Activated CD4-positive, alpha-beta memory T cell treated with anti-CD3 and anti-CD28 coated beads for 36 hours (primary cell): ENCODE measurements at regions of chr5 and their contacts with region 1.

Region 1: GRCh38 chr5:69093771-69094482 is at the start of gene SLC30A5:
- DNase-seq: peak; percentile 99
- H3K4me3 Mint-ChIP-seq: peak within 1 kb of the TSS; percentile 91
- H3K27ac Mint-ChIP-seq: peak within 1 kb of the TSS; percentile 89
- H3K4me1 Mint-ChIP-seq: peaks cover 26% of the 10 kb centered on the region
- H3K27me3 Mint-ChIP-seq: no peaks in the 10 kb centered on the region
- total RNA-seq, gene SLC30A5: 42.8 to 49.0 TPM

Region 2: DNA sequence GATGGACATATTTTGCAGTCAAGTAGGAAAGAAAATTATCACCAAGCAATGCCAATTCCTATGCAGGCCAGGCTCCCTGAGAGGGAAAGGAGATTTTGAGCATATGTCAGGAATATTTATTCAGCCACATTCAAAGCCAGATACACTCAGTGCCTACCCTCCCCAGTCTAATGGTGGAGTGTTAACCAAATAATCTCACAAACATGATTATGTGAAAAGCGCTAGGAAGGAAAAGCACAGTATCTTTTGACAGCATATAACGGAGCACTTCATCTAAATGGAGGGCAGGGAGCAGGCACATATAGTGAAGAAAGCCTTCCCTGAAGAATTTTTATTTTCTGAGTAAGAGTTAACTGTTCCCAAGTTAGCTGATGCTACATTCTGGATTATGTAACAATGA is 80.4 kb before region 1 on chr5:
- CTCF ChIA-PET with region 1: no interaction called
- POLR2A ChIA-PET with region 1: no interaction called
- intact Hi-C with region 1: no loop called
- DNase-seq: no peak
- H3K4me3 Mint-ChIP-seq: peak overlapping the region; percentile 3
- H3K27ac Mint-ChIP-seq: no peak overlapping the region
- H3K4me1 Mint-ChIP-seq: no peaks in the 10 kb centered on the region
- H3K27me3 Mint-ChIP-seq: peaks cover 14% of the 10 kb centered on the region

Region 3: DNA sequence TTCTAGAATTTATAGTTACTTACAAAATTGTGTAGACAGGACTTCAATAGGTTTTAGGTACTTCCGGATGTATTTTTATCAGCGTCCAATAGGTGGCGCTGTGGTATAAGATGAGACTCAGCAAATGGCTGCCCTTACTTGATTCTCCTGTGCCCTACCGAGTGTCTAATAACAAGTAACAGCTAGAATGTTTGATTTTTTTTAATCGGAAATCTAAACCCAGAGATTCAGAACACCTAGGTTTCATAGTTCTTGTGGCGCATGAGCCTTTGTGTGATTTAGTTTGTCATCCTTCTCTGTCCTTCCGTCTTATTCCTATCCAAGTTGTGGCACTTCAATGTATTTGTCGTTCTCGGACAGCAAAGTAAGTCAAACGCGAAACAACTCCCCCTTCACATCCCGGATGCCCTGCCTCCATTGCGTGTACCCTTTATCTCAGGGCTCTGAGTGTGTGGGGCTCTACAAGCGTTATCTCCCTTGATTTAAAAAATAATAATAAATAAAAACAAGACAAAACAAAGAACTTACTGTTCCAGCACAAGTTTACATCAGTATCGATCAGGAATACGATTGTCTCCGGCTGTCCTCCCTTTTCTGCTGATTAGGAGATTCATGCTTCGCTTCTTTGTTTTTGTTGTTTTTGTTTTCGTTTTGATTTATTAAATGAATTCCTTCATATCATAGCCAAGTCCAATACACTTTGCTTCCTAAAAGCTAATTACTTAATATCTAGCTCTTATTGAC is 50.8 kb before region 1 on chr5:
- CTCF ChIA-PET with region 1: interaction called, 26 read pairs
- POLR2A ChIA-PET with region 1: interaction called, 3 read pairs
- intact Hi-C with region 1: loop called (anchors 1 kb)
- DNase-seq: peak; percentile 82
- H3K4me3 Mint-ChIP-seq: peak overlapping the region; percentile 70
- H3K27ac Mint-ChIP-seq: peak overlapping the region; percentile 76
- H3K4me1 Mint-ChIP-seq: peaks cover 8% of the 10 kb centered on the region
- H3K27me3 Mint-ChIP-seq: no peaks in the 10 kb centered on the region

Region 4: GRCh38 chr5:69115526-69115925 is 21.6 kb after region 1 on chr5:
- CTCF ChIA-PET with region 1: interaction called, 10 read pairs
- POLR2A ChIA-PET with region 1: no interaction called
- intact Hi-C with region 1: no loop called
- DNase-seq: no peak
- H3K4me3 Mint-ChIP-seq: no peak overlapping the region
- H3K27ac Mint-ChIP-seq: no peak overlapping the region
- H3K4me1 Mint-ChIP-seq: no peaks in the 10 kb centered on the region
- H3K27me3 Mint-ChIP-seq: no peaks in the 10 kb centered on the region

Region 5: GRCh38 chr5:69158039-69158438 is 64.1 kb after region 1 on chr5:
- CTCF ChIA-PET with region 1: no interaction called
- POLR2A ChIA-PET with region 1: no interaction called
- intact Hi-C with region 1: no loop called
- DNase-seq: no peak
- H3K4me3 Mint-ChIP-seq: no peak overlapping the region
- H3K27ac Mint-ChIP-seq: no peak overlapping the region
- H3K4me1 Mint-ChIP-seq: no peaks in the 10 kb centered on the region
- H3K27me3 Mint-ChIP-seq: no peaks in the 10 kb centered on the region

Region 6: GRCh38 chr5:69189162-69190086 is 95.5 kb after region 1 on chr5 and contains the start of gene CENPH:
- CTCF ChIA-PET with region 1: interaction called, 15 read pairs
- POLR2A ChIA-PET with region 1: interaction called, 14 read pairs
- intact Hi-C with region 1: loop called (anchors 1 kb)
- DNase-seq: peak; percentile 96
- H3K4me3 Mint-ChIP-seq: peak within 1 kb of the TSS; percentile 90
- H3K27ac Mint-ChIP-seq: peak within 1 kb of the TSS; percentile 89
- H3K4me1 Mint-ChIP-seq: peaks cover 6% of the 10 kb centered on the region
- H3K27me3 Mint-ChIP-seq: no peaks in the 10 kb centered on the region
- total RNA-seq, gene CENPH: 80.7 to 82.0 TPM

Region 7: DNA sequence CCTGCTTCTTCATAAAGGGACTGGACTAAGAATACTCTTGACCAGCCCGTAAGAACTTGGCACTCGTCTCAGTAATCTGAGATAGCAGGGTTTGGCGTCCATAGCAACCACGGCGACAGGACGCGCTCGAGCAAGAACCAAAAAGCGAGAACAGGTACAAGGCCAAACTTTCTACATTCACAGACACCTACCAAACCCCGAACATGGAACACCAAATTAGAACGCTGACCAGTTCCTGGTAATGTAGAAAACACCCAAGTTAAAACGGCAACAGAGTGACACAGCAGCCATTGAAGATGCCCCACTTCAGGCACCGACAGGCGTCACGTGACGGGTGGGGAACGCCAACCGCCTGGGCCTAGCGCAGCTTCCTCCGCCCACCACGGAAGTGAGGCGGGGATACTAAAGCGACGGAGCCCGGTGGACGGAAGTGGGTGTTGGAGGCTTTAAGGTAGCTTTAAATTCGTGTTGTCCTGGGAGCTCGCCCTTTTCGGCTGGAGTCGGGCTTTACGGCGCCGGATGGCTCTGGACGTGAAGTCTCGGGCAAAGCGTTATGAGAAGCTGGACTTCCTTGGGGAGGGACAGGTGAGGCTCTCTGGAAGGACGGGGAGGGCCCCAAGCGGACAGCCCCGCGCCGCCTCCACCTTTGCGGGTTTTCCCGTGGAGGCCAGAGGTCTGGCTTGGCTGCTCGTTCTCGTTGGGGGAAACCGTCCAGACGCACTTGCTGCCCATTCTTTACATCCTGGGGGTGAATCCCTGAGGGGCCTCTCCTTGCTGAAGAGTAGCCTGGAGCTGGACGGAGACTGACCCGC is 140.7 kb after region 1 on chr5 and contains the start of gene CDK7:
- CTCF ChIA-PET with region 1: interaction called, 9 read pairs
- POLR2A ChIA-PET with region 1: interaction called, 7 read pairs
- intact Hi-C with region 1: loop called (anchors 2 kb)
- DNase-seq: peak; percentile 96
- H3K4me3 Mint-ChIP-seq: peak within 1 kb of the TSS; percentile 98
- H3K27ac Mint-ChIP-seq: peak within 1 kb of the TSS; percentile 81
- H3K4me1 Mint-ChIP-seq: peaks cover 36% of the 10 kb centered on the region
- H3K27me3 Mint-ChIP-seq: no peaks in the 10 kb centered on the region
- total RNA-seq, gene CDK7: 36.2 to 41.2 TPM

Region 8: DNA sequence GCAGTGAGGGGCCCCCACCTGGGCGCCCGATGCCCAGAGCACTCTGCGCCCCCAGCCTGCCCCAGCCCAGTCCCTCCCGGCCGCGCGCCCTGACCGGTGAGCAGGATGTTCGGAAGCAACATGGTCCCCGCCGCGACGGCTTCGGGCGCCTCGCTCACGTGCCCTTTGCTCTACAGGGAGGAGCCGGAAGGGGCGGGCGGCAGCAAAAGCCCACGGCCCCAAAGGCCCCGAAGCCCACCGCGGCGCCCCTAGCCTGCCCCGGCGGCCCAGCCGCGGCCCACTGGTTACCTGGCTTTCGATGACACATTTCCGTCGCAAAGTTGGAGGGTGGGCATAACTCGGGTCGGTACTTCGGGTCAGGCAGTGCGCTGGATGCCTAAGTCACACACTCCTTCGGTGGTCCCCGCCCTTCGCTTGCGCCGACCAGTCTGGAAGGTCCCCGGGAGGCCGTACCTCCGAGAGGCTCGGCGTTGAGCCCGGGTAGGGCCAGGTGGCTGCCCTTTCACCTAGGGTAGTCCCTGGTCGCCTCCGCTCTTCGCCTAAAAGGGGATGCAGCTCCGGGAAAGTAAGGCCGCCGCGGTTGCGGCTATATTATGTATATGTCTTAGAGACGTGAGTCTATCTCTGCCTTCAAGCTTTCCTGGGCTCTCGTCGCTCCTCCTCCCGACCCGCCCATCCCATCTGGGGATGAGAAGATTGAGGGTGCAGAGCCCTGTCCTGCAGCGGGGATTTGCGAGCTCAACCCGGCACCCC is 275.6 kb after region 1 on chr5 and contains the starts of genes AK6, RAD17 and TAF9:
- CTCF ChIA-PET with region 1: interaction called, 9 read pairs
- POLR2A ChIA-PET with region 1: interaction called, 5 read pairs
- intact Hi-C with region 1: loop called (anchors 1 kb)
- DNase-seq: peak; percentile 94
- H3K4me3 Mint-ChIP-seq: peak within 1 kb of the TSS; percentile 98
- H3K27ac Mint-ChIP-seq: peak within 1 kb of the TSS; percentile 97
- H3K4me1 Mint-ChIP-seq: peaks cover 44% of the 10 kb centered on the region
- H3K27me3 Mint-ChIP-seq: no peaks in the 10 kb centered on the region
- total RNA-seq, gene AK6: 79.8 to 87.0 TPM
- total RNA-seq, gene RAD17: 26.9 to 31.9 TPM
- total RNA-seq, gene TAF9: 55.8 to 58.3 TPM